ENCODE measurements at regions of chr12 and their contacts with region 1.

Region 1: GRCh38 chr12:49130151-49131050 is 794 bp downstream of the TUBA1B start:
- DNase-seq: peak; percentile 95
- ATAC-seq: peak; percentile 67
- H3K4me3 Mint-ChIP-seq: peak overlapping the region; percentile 83
- H3K27ac Mint-ChIP-seq: peak overlapping the region; percentile 98
- H3K4me1 Mint-ChIP-seq: peaks cover 28% of the 10 kb centered on the region
- H3K27me3 Mint-ChIP-seq: no peaks in the 10 kb centered on the region
- CTCF ChIP-seq: peak; percentile 95

Region 2: GRCh38 chr12:49018261-49019119 is 111.9 kb before region 1 on chr12 and contains the start of gene PRKAG1:
- CTCF ChIA-PET with region 1: no interaction called
- POLR2A ChIA-PET with region 1: interaction called, 22 read pairs
- intact Hi-C with region 1: no loop called
- DNase-seq: peak; percentile 96
- ATAC-seq: peak; percentile 90
- H3K4me3 Mint-ChIP-seq: peak within 1 kb of the TSS; percentile 95
- H3K27ac Mint-ChIP-seq: peak within 1 kb of the TSS; percentile 98
- H3K4me1 Mint-ChIP-seq: peaks cover 23% of the 10 kb centered on the region
- H3K27me3 Mint-ChIP-seq: no peaks in the 10 kb centered on the region
- CTCF ChIP-seq: peak; percentile 57
- total RNA-seq, gene PRKAG1: 43.3 to 47.3 TPM

Region 3: DNA sequence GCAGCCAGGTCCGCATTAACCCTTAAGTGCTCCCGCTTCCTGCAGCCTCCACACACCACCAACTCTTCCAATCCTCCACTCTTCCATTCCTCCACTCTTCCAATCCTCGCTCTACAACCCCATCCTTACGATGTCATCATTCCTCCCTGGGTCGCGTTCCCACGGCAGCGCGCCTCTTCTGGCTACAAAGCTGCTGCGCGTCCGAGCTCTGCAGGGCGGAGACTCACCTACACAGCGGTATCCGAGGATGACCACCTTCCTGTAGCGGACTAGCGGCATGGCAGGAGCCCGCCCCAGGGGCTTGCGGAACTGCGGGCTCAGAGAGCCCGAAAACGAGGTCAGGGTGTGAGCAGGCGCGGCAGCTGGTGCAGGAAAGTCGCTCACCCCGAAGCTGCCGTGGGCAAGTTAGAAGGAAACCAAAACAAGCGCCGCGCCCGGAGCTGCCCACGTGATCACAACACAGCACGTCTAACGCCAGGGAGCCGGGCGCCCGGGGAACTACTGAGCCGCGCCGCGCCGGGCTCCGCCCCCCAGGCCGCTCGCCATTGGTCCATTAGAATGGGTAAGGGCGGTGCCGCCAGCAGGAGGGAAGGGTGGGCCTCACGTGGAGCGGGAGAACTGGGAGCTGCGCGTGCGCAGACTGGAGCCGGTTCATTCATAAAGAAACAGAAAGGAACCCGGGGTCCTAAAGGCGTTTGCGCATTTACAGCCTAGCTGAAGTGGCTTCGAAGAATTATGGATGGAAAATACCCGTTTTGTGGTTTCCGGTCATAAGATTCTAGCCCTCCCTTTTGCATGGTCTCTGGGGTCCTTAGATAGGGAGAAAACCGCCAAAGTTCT is 60.7 kb before region 1 on chr12 and contains the start of gene RHEBL1:
- CTCF ChIA-PET with region 1: interaction called, 24 read pairs
- POLR2A ChIA-PET with region 1: interaction called, 16 read pairs
- intact Hi-C with region 1: no loop called
- DNase-seq: peak; percentile 100
- ATAC-seq: peak; percentile 100
- H3K4me3 Mint-ChIP-seq: peak within 1 kb of the TSS; percentile 98
- H3K27ac Mint-ChIP-seq: peak within 1 kb of the TSS; percentile 92
- H3K4me1 Mint-ChIP-seq: peaks cover 27% of the 10 kb centered on the region
- H3K27me3 Mint-ChIP-seq: no peaks in the 10 kb centered on the region
- CTCF ChIP-seq: no peak
- total RNA-seq, gene RHEBL1: 18.5 to 19.8 TPM

Region 4: DNA sequence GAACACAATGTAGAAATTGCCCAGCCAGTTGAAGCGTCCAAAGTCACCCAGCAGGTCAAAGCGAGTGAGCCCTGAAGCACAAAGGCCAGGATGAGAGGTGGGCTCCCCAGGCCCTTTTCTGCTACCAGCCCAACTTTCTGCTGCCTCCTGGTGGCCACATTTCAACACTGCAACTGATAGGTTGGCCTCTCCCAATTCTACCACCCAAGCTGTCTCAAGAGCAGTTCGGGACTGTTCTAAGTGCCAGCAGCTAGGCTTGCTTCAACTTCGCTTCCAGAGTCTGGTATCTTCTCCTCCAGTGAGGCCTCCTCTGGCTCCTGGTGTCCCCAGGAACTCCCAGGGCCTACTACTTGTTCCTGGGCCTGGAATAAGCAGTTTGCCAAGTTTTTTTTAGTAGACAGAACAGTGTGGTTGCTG is 32.4 kb before region 1 on chr12:
- CTCF ChIA-PET with region 1: interaction called, 12 read pairs
- POLR2A ChIA-PET with region 1: interaction called, 34 read pairs
- intact Hi-C with region 1: no loop called
- DNase-seq: peak; percentile 81
- ATAC-seq: peak; percentile 87
- H3K4me3 Mint-ChIP-seq: no peak overlapping the region
- H3K27ac Mint-ChIP-seq: no peak overlapping the region
- H3K4me1 Mint-ChIP-seq: peaks cover 7% of the 10 kb centered on the region
- H3K27me3 Mint-ChIP-seq: peaks cover 21% of the 10 kb centered on the region
- CTCF ChIP-seq: peak; percentile 87

Region 5: GRCh38 chr12:49110464-49111155 is 19.8 kb before region 1 on chr12 and contains the start of gene LMBR1L:
- CTCF ChIA-PET with region 1: interaction called, 6 read pairs
- POLR2A ChIA-PET with region 1: interaction called, 85 read pairs
- intact Hi-C with region 1: no loop called
- DNase-seq: peak; percentile 99
- ATAC-seq: peak; percentile 99
- H3K4me3 Mint-ChIP-seq: peak within 1 kb of the TSS; percentile 87
- H3K27ac Mint-ChIP-seq: peak within 1 kb of the TSS; percentile 97
- H3K4me1 Mint-ChIP-seq: peaks cover 35% of the 10 kb centered on the region
- H3K27me3 Mint-ChIP-seq: no peaks in the 10 kb centered on the region
- CTCF ChIP-seq: peak; percentile 50
- total RNA-seq, gene LMBR1L: 43.5 to 50.9 TPM

Region 6: DNA sequence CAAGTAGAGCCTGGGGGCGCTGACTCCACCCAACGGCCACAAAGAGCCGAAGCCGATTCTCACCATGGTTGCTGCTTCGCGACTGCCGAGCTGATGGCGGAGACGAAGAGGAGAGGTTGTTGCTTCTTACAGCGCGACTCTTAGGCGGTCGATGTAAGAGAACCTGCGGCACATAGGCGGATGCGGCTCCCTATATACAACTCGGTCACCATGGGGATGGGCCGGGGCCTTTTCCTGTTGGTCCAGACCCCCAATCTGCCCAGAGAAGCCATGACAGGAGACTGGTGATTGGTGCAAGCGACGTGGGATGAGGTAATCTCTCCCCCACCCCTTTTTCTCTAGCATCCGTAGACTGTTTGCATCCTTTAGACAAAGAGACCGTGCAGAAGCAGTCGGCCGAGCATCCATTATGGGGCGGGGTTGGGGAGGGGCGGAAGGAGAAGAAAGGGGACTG is 58.5 kb after region 1 on chr12 and contains the start of gene TUBA1A:
- CTCF ChIA-PET with region 1: interaction called, 13 read pairs
- POLR2A ChIA-PET with region 1: interaction called, 72 read pairs
- intact Hi-C with region 1: loop called (anchors 2 kb)
- DNase-seq: peak; percentile 99
- ATAC-seq: peak; percentile 92
- H3K4me3 Mint-ChIP-seq: peak within 1 kb of the TSS; percentile 95
- H3K27ac Mint-ChIP-seq: peak within 1 kb of the TSS; percentile 97
- H3K4me1 Mint-ChIP-seq: peaks cover 16% of the 10 kb centered on the region
- H3K27me3 Mint-ChIP-seq: no peaks in the 10 kb centered on the region
- CTCF ChIP-seq: no peak
- total RNA-seq, gene TUBA1A: 70.6 to 71.2 TPM

Region 7: GRCh38 chr12:49264738-49265515 is 134.5 kb after region 1 on chr12 and contains the start of gene TUBA1C:
- CTCF ChIA-PET with region 1: no interaction called
- POLR2A ChIA-PET with region 1: interaction called, 60 read pairs
- intact Hi-C with region 1: no loop called
- DNase-seq: peak; percentile 92
- ATAC-seq: peak; percentile 90
- H3K4me3 Mint-ChIP-seq: peak within 1 kb of the TSS; percentile 95
- H3K27ac Mint-ChIP-seq: peak within 1 kb of the TSS; percentile 98
- H3K4me1 Mint-ChIP-seq: peaks cover 38% of the 10 kb centered on the region
- H3K27me3 Mint-ChIP-seq: peaks cover 1% of the 10 kb centered on the region
- CTCF ChIP-seq: no peak
- total RNA-seq, gene TUBA1C: 237 to 240 TPM

Measured in activated CD8-positive, alpha-beta T cell treated with anti-CD3 and anti-CD28 coated beads for 36 hours (primary cell).